ENCODE measurements at regions of chr17 and their contacts with region 1.

Region 1: DNA sequence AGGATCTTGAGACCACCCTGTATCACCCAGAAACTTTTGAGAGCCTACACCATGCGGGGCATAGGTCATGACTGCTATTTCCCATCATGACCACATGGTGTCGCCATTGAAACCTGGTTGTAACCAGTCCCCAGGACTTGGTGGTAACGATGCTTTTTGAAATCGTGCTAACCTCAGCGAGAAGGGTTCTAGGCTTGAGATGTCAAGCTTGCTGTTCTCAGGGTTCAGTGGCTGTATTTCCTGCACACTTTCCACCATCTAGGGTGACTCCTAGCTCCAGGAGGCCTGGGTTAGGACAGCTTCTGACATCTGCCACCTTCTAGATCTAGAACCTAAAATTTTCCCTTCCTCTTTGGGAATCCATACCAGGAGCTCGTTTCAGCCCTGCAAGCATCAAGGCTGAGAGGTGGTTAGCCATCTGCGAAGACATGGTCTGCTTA is 13.0 kb upstream of the SPNS3 start:
- DNase-seq: peak in 1 of 2 experiments; percentile 74
- H3K4me3 ChIP-seq: no peak overlapping the region
- H3K27ac ChIP-seq: no peak overlapping the region
- H3K4me1 ChIP-seq: no peaks in the 10 kb centered on the region
- H3K27me3 ChIP-seq: no peaks in the 10 kb centered on the region; a peak in 1 of 7 replicates
- CTCF ChIP-seq: peak; percentile 83 to 95 (median 86)
- EP300 ChIP-seq: no peak
- POLR2A ChIP-seq: no peak
- RAD21 ChIP-seq: peak; percentile 88 to 93

Region 2: DNA sequence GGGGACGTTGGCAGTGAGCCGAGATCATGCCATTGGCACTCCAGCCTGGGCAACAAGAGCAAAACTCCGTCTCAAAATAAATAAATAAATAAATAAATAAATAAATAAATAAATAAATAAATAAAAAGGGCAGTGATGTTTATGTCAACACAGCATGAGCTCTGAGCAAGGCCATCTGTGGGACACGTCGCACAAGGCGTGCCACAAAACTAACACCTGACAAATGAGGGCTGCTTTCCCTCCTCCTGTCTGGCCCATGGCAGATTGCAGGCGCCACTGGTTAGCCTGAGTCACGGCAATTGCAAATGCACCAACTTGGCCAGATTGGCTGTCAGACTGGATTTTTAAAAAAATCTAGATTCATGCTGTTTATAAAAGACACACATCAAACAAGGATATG is 12.9 kb before region 1 on chr17:
- CTCF ChIA-PET with region 1: interaction called, 23 read pairs
- POLR2A ChIA-PET with region 1: interaction called, 3 read pairs
- DNase-seq: no peak
- H3K4me3 ChIP-seq: no peak overlapping the region
- H3K27ac ChIP-seq: no peak overlapping the region
- H3K4me1 ChIP-seq: peaks cover 0 to 5% (median 2%) of the 10 kb centered on the region in 4 experiments; a peak in 4 of 7 replicates
- H3K27me3 ChIP-seq: no peaks in the 10 kb centered on the region
- CTCF ChIP-seq: no peak
- EP300 ChIP-seq: no peak
- POLR2A ChIP-seq: no peak
- RAD21 ChIP-seq: no peak

Region 3: GRCh38 chr17:4433515-4434031 is 12.9 kb after region 1 on chr17 and contains the start of gene SPNS3:
- CTCF ChIA-PET with region 1: interaction called, 18 read pairs
- POLR2A ChIA-PET with region 1: interaction called, 3 read pairs
- DNase-seq: no peak
- H3K4me3 ChIP-seq: no peak within 1 kb of the TSS
- H3K27ac ChIP-seq: no peak within 1 kb of the TSS
- H3K4me1 ChIP-seq: no peaks in the 10 kb centered on the region
- H3K27me3 ChIP-seq: no peaks in the 10 kb centered on the region
- CTCF ChIP-seq: no peak
- EP300 ChIP-seq: no peak
- POLR2A ChIP-seq: no peak
- RAD21 ChIP-seq: no peak
- total RNA-seq, gene SPNS3: not detected in 2 replicates

Region 4: GRCh38 chr17:4534026-4534914 is 113.6 kb after region 1 on chr17:
- CTCF ChIA-PET with region 1: interaction called, 14 read pairs
- POLR2A ChIA-PET with region 1: interaction called, 7 read pairs
- DNase-seq: no peak
- H3K4me3 ChIP-seq: no peak overlapping the region
- H3K27ac ChIP-seq: no peak overlapping the region
- H3K4me1 ChIP-seq: peaks cover 0 to 29% (median 16%) of the 10 kb centered on the region in 4 experiments; a peak in 6 of 7 replicates
- H3K27me3 ChIP-seq: peaks cover 0 to 36% (median 21%) of the 10 kb centered on the region in 4 experiments; a peak in 4 of 7 replicates
- CTCF ChIP-seq: no peak
- EP300 ChIP-seq: no peak
- POLR2A ChIP-seq: 0 out of 3 replicates have a peak, but pooled peaks of 1 of the 2 experiments have one; percentile 2
- RAD21 ChIP-seq: no peak

Region 5: GRCh38 chr17:4540224-4540641 is 119.5 kb after region 1 on chr17:
- CTCF ChIA-PET with region 1: interaction called, 14 read pairs
- POLR2A ChIA-PET with region 1: interaction called, 7 read pairs
- DNase-seq: no peak
- H3K4me3 ChIP-seq: no peak overlapping the region
- H3K27ac ChIP-seq: no peak overlapping the region
- H3K4me1 ChIP-seq: peaks cover 0 to 19% (median 14%) of the 10 kb centered on the region in 4 experiments; a peak in 6 of 7 replicates
- H3K27me3 ChIP-seq: peaks cover 0 to 4% (median 0%) of the 10 kb centered on the region in 4 experiments; a peak in 2 of 7 replicates
- CTCF ChIP-seq: peak; percentile 46 to 96 (median 56)
- EP300 ChIP-seq: no peak
- POLR2A ChIP-seq: no peak
- RAD21 ChIP-seq: peak; percentile 28 to 50

Measured in H1 (cell line).